GM10248 (cell line): ENCODE measurements at regions of chr14 and their contacts with region 1.

Region 1: GRCh38 chr14:78758332-78758731 is 588.2 kb downstream of the NRXN3 start:
- DNase-seq: peak; percentile 20
- CTCF ChIP-seq: peak; percentile 17

Region 2: GRCh38 chr14:78737116-78737515 is 21.2 kb before region 1 on chr14:
- CTCF ChIA-PET with region 1: interaction called, 10 read pairs
- POLR2A ChIA-PET with region 1: no interaction called
- DNase-seq: no peak
- CTCF ChIP-seq: no peak